Mammary epithelial cell (primary cell): ENCODE measurements at regions of chr19 and their contacts with region 1.

Region 1: GRCh38 chr19:3250675-3251074 is 26.2 kb downstream of the CELF5 start:
- DNase-seq: no peak
- H3K4me3 ChIP-seq: no peak overlapping the region
- H3K27ac ChIP-seq: no peak overlapping the region
- H3K4me1 ChIP-seq: no peaks in the 10 kb centered on the region
- H3K27me3 ChIP-seq: no peaks in the 10 kb centered on the region
- CTCF ChIP-seq: peak; percentile 56 to 68

Region 2: DNA sequence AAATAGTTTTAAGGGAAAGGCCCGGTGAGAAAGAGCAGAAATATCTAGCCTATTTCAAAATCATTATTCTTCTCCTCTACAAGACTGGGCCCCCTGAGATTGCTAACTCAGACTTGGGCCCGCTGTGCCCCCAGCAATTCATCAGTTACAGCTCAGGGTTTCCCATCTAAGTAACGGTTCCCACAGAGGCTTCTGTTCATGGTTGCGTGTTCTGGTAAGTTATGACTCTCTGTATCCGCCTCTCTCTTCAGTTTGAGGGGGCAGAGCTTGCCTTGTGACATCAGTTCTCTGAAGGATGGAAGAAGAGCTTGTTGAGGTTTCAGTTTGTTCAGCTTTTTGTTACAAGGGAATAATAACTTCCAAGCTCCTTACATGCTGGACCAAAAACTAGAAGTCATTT is 338.4 kb before region 1 on chr19:
- CTCF ChIA-PET with region 1: interaction called, 31 read pairs
- dilution Hi-C with region 1: no loop called
- in situ Hi-C with region 1: no loop called
- intact Hi-C with region 1: no loop called
- DNase-seq: no peak
- H3K4me3 ChIP-seq: no peak overlapping the region
- H3K27ac ChIP-seq: no peak overlapping the region
- H3K4me1 ChIP-seq: peaks cover 18% of the 10 kb centered on the region
- H3K27me3 ChIP-seq: no peaks in the 10 kb centered on the region
- CTCF ChIP-seq: no peak

Region 3: DNA sequence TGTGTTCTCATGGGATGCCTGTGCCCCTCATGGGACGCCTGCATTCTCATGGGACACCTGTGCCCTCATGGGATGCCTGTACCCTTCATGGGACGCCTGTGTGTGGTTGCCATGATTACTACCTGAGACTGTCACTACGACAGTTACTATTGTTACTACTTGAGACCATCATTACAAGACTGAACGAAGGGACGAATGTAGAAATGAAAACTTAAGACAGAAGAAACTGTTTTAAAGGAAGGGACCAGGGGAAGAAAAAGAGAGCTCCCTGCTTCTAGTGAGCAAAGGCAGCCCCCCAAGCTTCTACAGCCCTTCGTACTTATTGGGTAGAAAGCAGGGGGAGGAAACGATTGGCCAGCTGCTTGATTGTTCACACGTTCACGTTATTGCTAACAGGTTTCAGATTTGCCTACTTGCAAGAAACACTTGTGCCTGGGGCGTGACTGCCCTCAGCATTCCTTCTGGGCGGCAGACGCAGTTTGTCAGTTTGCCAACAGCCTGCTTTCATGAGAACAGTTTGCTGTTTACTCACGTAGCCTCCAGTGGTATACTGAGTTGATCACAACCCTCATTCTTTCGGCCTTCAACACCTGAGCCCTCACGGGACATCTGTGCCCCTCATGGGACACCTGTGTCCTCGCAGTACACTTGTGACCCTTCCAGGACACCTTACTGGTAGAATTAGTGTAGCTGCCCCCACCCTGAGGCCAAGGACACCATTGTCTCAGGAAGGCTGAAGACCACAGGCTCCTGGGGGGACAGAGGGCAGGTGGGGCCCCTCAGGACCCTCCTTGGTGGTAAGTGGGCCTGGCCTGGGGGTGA is 74.7 kb before region 1 on chr19:
- CTCF ChIA-PET with region 1: no interaction called
- dilution Hi-C with region 1: no loop called
- in situ Hi-C with region 1: no loop called
- intact Hi-C with region 1: no loop called
- DNase-seq: peak; percentile 96
- H3K4me3 ChIP-seq: no peak overlapping the region
- H3K27ac ChIP-seq: peak overlapping the region; percentile 95
- H3K4me1 ChIP-seq: peaks cover 41% of the 10 kb centered on the region
- H3K27me3 ChIP-seq: no peaks in the 10 kb centered on the region
- CTCF ChIP-seq: no peak

Region 4: DNA sequence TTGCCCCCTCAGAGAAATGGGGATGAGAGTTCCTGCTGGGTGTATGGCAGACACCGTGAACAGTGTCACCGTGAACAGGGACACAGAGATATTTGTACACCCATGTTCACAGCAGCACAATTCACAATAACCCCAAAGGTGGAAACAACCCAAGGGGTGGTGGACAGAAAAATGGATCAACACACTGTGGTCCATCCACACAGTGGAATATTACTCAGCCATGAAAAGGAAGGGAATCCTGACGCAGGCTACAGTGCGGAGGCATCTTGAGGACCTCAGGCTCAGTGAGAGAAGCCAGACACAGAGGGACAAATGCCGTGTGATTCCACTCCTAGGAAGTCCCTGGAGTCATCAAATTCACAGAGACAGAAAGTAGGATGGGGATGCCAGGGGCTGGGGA is 33.8 kb before region 1 on chr19:
- CTCF ChIA-PET with region 1: no interaction called
- dilution Hi-C with region 1: loop called (anchors 5 kb)
- in situ Hi-C with region 1: no loop called
- intact Hi-C with region 1: no loop called
- DNase-seq: no peak
- H3K4me3 ChIP-seq: no peak overlapping the region
- H3K27ac ChIP-seq: no peak overlapping the region
- H3K4me1 ChIP-seq: no peaks in the 10 kb centered on the region
- H3K27me3 ChIP-seq: no peaks in the 10 kb centered on the region
- CTCF ChIP-seq: no peak